ENCODE measurements at regions of chr3 and their contacts with region 1.

Region 1: DNA sequence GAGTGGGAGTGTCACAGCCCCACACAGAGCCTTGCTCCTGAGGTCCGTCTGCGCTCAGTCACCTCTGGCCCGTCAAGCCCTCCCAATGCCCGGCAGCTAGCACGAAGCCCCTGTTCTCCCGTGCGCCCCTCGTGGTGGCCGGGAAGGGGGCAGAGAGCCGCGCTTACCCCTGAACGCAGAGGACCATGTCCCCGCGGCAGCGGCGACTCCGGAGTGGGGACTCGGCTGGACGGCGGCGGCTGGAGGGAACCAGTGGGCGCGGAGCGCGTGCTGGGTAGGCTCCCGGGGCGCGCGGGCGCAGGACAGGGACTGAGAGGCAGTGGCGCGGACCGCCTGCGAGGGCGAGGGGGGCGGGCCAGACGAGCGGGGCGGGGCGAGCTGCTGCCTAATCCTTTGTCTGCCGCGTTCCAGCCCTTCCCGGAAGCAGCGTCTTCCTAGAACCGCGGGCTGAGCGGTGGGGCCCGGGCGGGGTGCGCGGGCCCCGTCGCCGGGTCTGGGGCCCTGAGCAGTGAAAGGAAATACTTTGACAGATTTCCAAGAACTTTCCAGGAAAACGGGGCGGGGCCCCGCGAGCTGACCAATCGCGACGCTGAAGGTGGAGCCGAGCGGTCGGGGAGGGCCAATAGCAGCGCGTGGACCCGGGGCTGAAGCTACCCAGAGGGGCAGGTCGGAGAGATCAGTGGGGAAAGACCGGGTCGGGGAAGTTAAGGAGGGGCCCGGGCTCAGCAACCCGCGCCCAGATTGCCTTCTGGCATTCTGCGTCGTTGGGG is at the start of gene CISH:
- DNase-seq: peak; percentile 86
- H3K4me3 ChIP-seq: peak within 1 kb of the TSS; percentile 81
- H3K27ac ChIP-seq: peak within 1 kb of the TSS; percentile 39
- H3K27me3 ChIP-seq: no peaks in the 10 kb centered on the region
- CTCF ChIP-seq: peak; percentile 61
- polyA plus RNA-seq, gene CISH: 2.4 and 4.1 TPM in 2 replicates

Region 2: GRCh38 chr3:50587806-50588758 is 23.6 kb before region 1 on chr3:
- CTCF ChIA-PET with region 1: interaction called, 35 read pairs
- POLR2A ChIA-PET with region 1: interaction called, 3 read pairs
- DNase-seq: no peak
- H3K4me3 ChIP-seq: no peak overlapping the region
- H3K27ac ChIP-seq: no peak overlapping the region
- H3K27me3 ChIP-seq: no peaks in the 10 kb centered on the region
- CTCF ChIP-seq: no peak

Region 3: GRCh38 chr3:50652709-50653108 is 41.1 kb after region 1 on chr3:
- CTCF ChIA-PET with region 1: interaction called, 31 read pairs
- POLR2A ChIA-PET with region 1: no interaction called
- DNase-seq: no peak
- H3K4me3 ChIP-seq: no peak overlapping the region
- H3K27ac ChIP-seq: no peak overlapping the region
- H3K27me3 ChIP-seq: peaks cover under 1% of the 10 kb centered on the region
- CTCF ChIP-seq: peak; percentile 29; the same call in 1 of the 2 replicates

Region 4: DNA sequence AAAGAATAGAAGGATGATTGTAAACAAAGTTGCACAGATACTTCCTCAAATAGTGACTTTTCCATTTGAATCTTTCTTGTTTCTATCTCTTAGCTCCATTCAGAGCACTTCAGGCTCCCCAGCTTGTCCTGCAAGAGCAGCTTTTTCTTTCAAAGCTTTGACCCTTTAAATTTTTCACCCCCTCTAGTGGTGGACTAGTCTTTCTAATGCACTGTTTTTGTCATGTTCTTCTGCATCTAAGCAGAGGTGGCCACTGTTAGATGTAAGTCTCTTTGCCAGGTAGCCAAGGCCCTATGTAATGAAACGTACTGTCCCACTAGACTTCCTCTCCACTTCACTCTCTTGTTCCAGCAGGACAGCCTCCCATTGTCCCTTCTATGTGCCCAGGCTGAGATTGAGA is 699.4 kb after region 1 on chr3:
- CTCF ChIA-PET with region 1: interaction called, 28 read pairs
- POLR2A ChIA-PET with region 1: no interaction called
- DNase-seq: peak; percentile 7
- H3K4me3 ChIP-seq: no peak overlapping the region
- H3K27ac ChIP-seq: no peak overlapping the region
- H3K27me3 ChIP-seq: peaks cover 6% of the 10 kb centered on the region
- CTCF ChIP-seq: peak; percentile 62

Region 5: DNA sequence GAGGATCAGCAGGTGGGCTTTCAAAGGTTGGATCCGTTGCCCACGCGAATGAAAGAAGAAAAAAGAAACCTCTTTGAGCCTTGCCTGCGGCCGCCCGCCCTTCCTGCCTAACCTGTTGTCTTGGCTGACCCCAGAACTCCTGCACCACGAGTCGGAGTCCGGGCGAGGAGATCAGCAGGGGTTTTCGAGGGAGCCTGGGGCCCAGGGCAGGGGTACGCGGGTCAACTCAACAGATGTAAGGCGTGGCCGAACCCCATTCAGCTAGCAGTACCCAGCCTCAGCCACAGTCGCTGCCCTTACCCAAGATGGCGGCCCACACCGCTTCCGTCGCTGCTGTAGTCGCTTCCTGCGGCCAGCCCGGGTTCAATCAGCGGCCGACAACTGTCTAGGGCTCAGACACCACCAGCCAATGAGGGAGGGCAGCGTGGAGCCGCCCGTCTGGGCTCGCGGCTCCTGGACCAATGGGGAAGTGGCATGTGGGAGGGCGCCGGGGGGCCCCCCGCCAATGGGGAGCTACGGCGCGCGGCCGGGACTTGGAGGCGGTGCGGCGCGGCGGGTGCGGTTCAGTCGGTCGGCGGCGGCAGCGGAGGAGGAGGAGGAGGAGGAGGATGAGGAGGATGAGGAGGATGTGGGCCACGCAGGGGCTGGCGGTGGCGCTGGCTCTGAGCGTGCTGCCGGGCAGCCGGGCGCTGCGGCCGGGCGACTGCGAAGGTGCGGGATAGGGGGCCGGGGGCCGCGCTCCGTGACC is 773.3 kb after region 1 on chr3 and contains the start of gene MANF:
- CTCF ChIA-PET with region 1: interaction called, 39 read pairs
- POLR2A ChIA-PET with region 1: interaction called, 4 read pairs
- DNase-seq: peak; percentile 94
- H3K4me3 ChIP-seq: peak within 1 kb of the TSS; percentile 97
- H3K27ac ChIP-seq: peak within 1 kb of the TSS; percentile 85
- H3K27me3 ChIP-seq: no peaks in the 10 kb centered on the region
- CTCF ChIP-seq: no peak
- polyA plus RNA-seq, gene MANF: 58.8 and 79.5 TPM in 2 replicates

Measured in AG04450 (cell line).